B cell (primary cell): ENCODE measurements at regions of chrX and their contacts with region 1.

Region 1: GRCh38 chrX:78754917-78755316 is 7.4 kb downstream of the LPAR4 start:
- DNase-seq: peak; percentile 61
- ATAC-seq: peak; percentile 95
- H3K4me3 ChIP-seq: peak overlapping the region; percentile 34 to 53 (median 40)
- H3K4me3 Mint-ChIP-seq: peak overlapping the region; percentile 80
- H3K27ac ChIP-seq: peak overlapping the region; percentile 62 to 70
- H3K27ac Mint-ChIP-seq: peak overlapping the region; percentile 92
- H3K4me1 ChIP-seq: peaks cover 38 to 42% of the 10 kb centered on the region in 2 donors
- H3K4me1 Mint-ChIP-seq: peaks cover 40% of the 10 kb centered on the region
- H3K27me3 ChIP-seq: no peaks in the 10 kb centered on the region
- H3K27me3 Mint-ChIP-seq: no peaks in the 10 kb centered on the region
- CTCF ChIP-seq: no peak

Region 2: GRCh38 chrX:78103623-78104446 is 651.1 kb before region 1 on chrX and contains the start of gene PGK1:
- CTCF ChIA-PET with region 1: no interaction called
- POLR2A ChIA-PET with region 1: no interaction called
- intact Hi-C with region 1: loop called (anchors 10 kb)
- DNase-seq: peak; percentile 94
- ATAC-seq: peak; percentile 97
- H3K4me3 ChIP-seq: peak within 1 kb of the TSS; percentile 43 to 90 (median 76)
- H3K4me3 Mint-ChIP-seq: peak within 1 kb of the TSS; percentile 97
- H3K27ac ChIP-seq: peak within 1 kb of the TSS; percentile 87 to 89
- H3K27ac Mint-ChIP-seq: peak within 1 kb of the TSS; percentile 97
- H3K4me1 ChIP-seq: peaks cover 30 to 44% of the 10 kb centered on the region in 2 donors
- H3K4me1 Mint-ChIP-seq: peaks cover 41% of the 10 kb centered on the region
- H3K27me3 ChIP-seq: no peaks in the 10 kb centered on the region
- H3K27me3 Mint-ChIP-seq: no peaks in the 10 kb centered on the region
- CTCF ChIP-seq: no peak
- total RNA-seq, gene PGK1: 153 and 162 TPM in 2 replicates

Region 3: GRCh38 chrX:78321809-78322208 is 433.1 kb before region 1 on chrX:
- CTCF ChIA-PET with region 1: no interaction called
- POLR2A ChIA-PET with region 1: no interaction called
- intact Hi-C with region 1: loop called (anchors 10 kb)
- DNase-seq: peak; percentile 81
- ATAC-seq: peak; percentile 97
- H3K4me3 ChIP-seq: peak overlapping the region in 1 of 5 experiments; percentile 38
- H3K4me3 Mint-ChIP-seq: peak overlapping the region; percentile 73
- H3K27ac ChIP-seq: peak overlapping the region in 1 of 2 donors; percentile 74
- H3K27ac Mint-ChIP-seq: peak overlapping the region; percentile 77
- H3K4me1 ChIP-seq: peaks cover 41 to 45% of the 10 kb centered on the region in 2 donors
- H3K4me1 Mint-ChIP-seq: peaks cover 55% of the 10 kb centered on the region
- H3K27me3 ChIP-seq: no peaks in the 10 kb centered on the region
- H3K27me3 Mint-ChIP-seq: no peaks in the 10 kb centered on the region
- CTCF ChIP-seq: no peak

Region 4: DNA sequence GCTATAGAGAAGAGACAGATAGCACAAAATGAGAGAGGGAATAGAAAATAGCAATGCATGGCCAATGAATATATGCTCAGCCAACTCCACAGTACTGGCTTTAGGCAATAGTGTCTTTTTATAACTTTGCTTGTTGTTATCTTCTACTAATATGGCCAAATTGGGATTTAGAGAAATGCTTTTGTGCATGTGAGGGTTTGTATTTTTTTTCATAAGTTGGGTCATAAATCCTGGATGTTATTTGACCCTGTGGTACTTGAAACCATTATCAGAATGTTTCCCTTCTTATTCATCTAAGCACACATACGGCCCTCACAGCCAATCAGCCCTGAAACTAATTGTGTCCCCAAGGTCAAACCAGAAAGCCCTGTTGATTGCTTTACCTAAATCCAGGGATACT is 42.6 kb before region 1 on chrX:
- CTCF ChIA-PET with region 1: no interaction called
- POLR2A ChIA-PET with region 1: no interaction called
- intact Hi-C with region 1: loop called (anchors 1 kb)
- DNase-seq: no peak
- ATAC-seq: no peak
- H3K4me3 ChIP-seq: no peak overlapping the region
- H3K4me3 Mint-ChIP-seq: no peak overlapping the region
- H3K27ac ChIP-seq: no peak overlapping the region
- H3K27ac Mint-ChIP-seq: no peak overlapping the region
- H3K4me1 ChIP-seq: no peaks in the 10 kb centered on the region
- H3K4me1 Mint-ChIP-seq: no peaks in the 10 kb centered on the region
- H3K27me3 ChIP-seq: no peaks in the 10 kb centered on the region
- H3K27me3 Mint-ChIP-seq: no peaks in the 10 kb centered on the region
- CTCF ChIP-seq: no peak

Region 5: DNA sequence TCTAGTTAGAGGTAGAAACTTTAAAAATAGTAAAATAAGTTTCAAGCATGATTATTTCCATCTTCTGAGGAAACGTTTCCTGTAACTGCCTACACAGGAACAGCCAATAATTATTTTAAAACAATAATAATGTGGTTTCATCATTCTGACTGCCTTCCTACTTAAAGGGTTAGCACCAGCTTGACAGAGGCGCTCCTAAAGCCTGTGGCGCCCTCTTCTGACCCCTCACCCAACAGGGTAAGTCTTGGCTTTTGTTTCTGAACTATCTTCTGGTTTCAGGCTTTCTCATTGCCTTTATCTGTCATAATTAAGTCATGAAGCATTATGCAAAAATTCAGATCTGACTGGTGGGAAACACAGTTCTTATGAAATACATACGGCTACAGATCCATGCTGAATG is 515.5 kb after region 1 on chrX:
- CTCF ChIA-PET with region 1: interaction called, 3 read pairs
- POLR2A ChIA-PET with region 1: no interaction called
- intact Hi-C with region 1: loop called (anchors 5 kb)
- DNase-seq: peak; percentile 77
- ATAC-seq: peak; percentile 91
- H3K4me3 ChIP-seq: no peak overlapping the region
- H3K4me3 Mint-ChIP-seq: no peak overlapping the region
- H3K27ac ChIP-seq: peak overlapping the region; percentile 16 to 42
- H3K27ac Mint-ChIP-seq: peak overlapping the region; percentile 54
- H3K4me1 ChIP-seq: peaks cover 20 to 26% of the 10 kb centered on the region in 2 donors
- H3K4me1 Mint-ChIP-seq: peaks cover 44% of the 10 kb centered on the region
- H3K27me3 ChIP-seq: no peaks in the 10 kb centered on the region
- H3K27me3 Mint-ChIP-seq: no peaks in the 10 kb centered on the region
- CTCF ChIP-seq: peak; percentile 77